ENCODE measurements at regions of chr11 and their contacts with region 1.

Region 1: DNA sequence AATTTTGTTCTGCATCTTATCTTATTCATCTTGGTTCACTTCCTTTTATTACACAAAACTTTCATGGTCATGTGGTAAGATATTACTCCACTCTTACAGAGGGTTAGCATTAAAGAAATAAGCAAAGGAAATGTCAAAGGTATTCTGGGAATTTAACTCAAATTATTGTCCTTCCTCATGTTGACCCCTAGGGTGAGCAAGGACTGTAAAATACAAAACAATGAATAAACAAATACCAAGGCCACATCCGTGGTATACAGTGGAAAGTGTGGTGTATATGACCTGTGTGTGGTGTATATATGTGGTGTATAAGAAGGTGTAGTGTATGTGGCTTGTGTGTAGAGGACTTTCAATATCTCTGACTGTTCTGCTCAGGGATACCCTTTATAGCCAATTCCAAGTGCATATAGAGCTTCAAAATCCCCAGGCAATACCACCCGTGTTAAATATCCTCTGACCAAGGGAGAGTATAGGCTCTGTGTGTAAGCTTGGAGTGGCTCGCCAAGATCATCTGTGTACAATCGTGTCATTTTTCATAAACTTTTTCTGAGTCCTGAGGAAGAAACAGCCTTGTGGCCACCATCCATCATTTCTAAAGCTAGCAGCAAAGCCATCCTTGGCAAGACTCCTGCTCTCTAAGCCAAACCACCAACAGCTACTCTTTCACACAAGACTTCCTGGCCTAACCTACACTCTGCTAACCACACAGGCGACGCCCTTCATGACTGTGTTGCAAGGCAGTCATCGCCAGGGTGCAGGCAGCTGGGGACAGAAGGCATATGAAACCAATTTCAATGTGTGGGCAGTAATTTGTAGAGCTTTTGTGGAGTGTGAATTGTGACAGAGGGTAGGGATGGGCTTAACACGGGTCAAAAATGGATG is 548.0 kb downstream of the ETS1 start:
- DNase-seq: peak; percentile 80 to 83 (median 81)
- H3K4me3 ChIP-seq: peak overlapping the region in 1 of 3 experiments; percentile 59
- H3K4me3 Mint-ChIP-seq: peak overlapping the region; percentile 9 to 65
- H3K27ac ChIP-seq: peak overlapping the region; percentile 18 to 79
- H3K27ac Mint-ChIP-seq: peak overlapping the region; percentile 90 to 98 (median 95)
- H3K4me1 ChIP-seq: peaks cover 35 to 37% of the 10 kb centered on the region in 2 donors
- H3K4me1 Mint-ChIP-seq: peaks cover 52% of the 10 kb centered on the region
- H3K27me3 ChIP-seq: no peaks in the 10 kb centered on the region
- H3K27me3 Mint-ChIP-seq: peaks cover 0 to 1% (median 0%) of the 10 kb centered on the region in 3 donors
- CTCF ChIP-seq: peak; percentile 57

Region 2: GRCh38 chr11:128157423-128158298 is 118.3 kb after region 1 on chr11:
- intact Hi-C with region 1: loop called (anchors 5 kb)
- DNase-seq: peak; percentile 57 to 73 (median 72)
- H3K4me3 ChIP-seq: peak overlapping the region in 2 of 3 experiments; percentile 27 to 61
- H3K4me3 Mint-ChIP-seq: peak overlapping the region; percentile 51 to 76
- H3K27ac ChIP-seq: no peak overlapping the region
- H3K27ac Mint-ChIP-seq: peak overlapping the region in 3 of 7 donors; percentile 50 to 76 (median 73)
- H3K4me1 ChIP-seq: peaks cover 7 to 8% of the 10 kb centered on the region in 2 donors
- H3K4me1 Mint-ChIP-seq: peaks cover 10% of the 10 kb centered on the region
- H3K27me3 ChIP-seq: no peaks in the 10 kb centered on the region
- H3K27me3 Mint-ChIP-seq: peaks cover 0 to 2% (median 0%) of the 10 kb centered on the region in 3 donors
- CTCF ChIP-seq: peak; percentile 100

Region 3: GRCh38 chr11:128831174-128832120 is 792.1 kb after region 1 on chr11:
- intact Hi-C with region 1: loop called in 1 of 2 experiments (anchors 10 kb)
- DNase-seq: peak; percentile 65 to 74 (median 72)
- H3K4me3 ChIP-seq: peak overlapping the region; percentile 42 to 80 (median 66)
- H3K4me3 Mint-ChIP-seq: peak overlapping the region; percentile 69 to 72
- H3K27ac ChIP-seq: peak overlapping the region in 1 of 2 donors; percentile 5
- H3K27ac Mint-ChIP-seq: peak overlapping the region in 1 of 7 donors; percentile 56
- H3K4me1 ChIP-seq: peaks cover 16 to 17% of the 10 kb centered on the region in 2 donors
- H3K4me1 Mint-ChIP-seq: peaks cover 49% of the 10 kb centered on the region
- H3K27me3 ChIP-seq: no peaks in the 10 kb centered on the region
- H3K27me3 Mint-ChIP-seq: peaks cover 0 to 2% (median 0%) of the 10 kb centered on the region in 3 donors
- CTCF ChIP-seq: peak; percentile 94